Common myeloid progenitor, CD34-positive (primary cell): ENCODE measurements at regions of chr13 and their contacts with region 1.

Region 1: DNA sequence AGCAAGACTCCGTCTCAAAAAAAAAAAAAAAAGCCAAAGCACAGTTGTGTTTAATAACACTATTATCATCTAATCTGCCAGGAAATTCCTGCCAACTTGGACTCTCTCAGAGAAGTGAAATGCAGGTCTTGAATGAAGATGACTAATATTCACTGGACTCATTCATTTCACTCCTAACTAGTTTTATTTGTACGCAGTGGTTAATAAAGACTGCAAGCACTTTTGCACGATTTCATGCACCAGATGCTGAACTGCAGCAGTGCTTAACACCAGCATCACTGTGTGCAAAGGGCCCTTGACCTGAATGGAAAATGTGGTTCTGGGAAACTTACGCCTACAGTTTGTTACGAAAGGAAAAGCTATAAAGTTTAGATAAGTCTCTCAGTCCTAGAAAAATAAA is 63.3 kb downstream of the DHRS12 start:
- DNase-seq: no peak
- H3K4me3 ChIP-seq: no peak overlapping the region
- H3K27ac ChIP-seq: no peak overlapping the region
- H3K4me1 ChIP-seq: peaks cover 0 to 4% (median 0%) of the 10 kb centered on the region in 4 experiments
- H3K27me3 ChIP-seq: no peaks in the 10 kb centered on the region

Region 2: DNA sequence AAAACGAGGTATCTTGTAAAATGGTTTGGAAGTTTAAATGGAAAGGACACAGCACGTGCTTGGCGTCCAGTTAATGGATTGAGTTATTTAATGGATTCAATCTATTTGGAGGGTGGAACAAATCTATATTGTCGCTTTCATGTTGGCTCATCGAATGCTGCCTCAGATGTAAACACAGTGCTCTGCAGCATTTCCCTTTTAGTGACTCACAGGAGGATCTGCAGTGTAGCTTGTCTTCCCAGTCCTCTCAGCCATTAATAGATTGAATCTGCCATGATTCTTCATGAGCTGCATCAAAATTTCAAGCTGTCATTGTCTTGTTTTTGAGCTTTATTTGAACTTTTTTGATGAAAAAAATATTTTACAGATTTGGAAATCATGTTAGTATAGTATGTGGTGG is 18.5 kb after region 1 on chr13:
- CTCF ChIA-PET with region 1: interaction called, 17 read pairs
- POLR2A ChIA-PET with region 1: interaction called, 5 read pairs
- DNase-seq: no peak
- H3K4me3 ChIP-seq: no peak overlapping the region
- H3K27ac ChIP-seq: no peak overlapping the region
- H3K4me1 ChIP-seq: peaks cover 0 to 4% (median 3%) of the 10 kb centered on the region in 4 experiments
- H3K27me3 ChIP-seq: no peaks in the 10 kb centered on the region